Mammary epithelial cell (primary cell): ENCODE measurements at regions of chr3 and their contacts with region 1.

Region 1: DNA sequence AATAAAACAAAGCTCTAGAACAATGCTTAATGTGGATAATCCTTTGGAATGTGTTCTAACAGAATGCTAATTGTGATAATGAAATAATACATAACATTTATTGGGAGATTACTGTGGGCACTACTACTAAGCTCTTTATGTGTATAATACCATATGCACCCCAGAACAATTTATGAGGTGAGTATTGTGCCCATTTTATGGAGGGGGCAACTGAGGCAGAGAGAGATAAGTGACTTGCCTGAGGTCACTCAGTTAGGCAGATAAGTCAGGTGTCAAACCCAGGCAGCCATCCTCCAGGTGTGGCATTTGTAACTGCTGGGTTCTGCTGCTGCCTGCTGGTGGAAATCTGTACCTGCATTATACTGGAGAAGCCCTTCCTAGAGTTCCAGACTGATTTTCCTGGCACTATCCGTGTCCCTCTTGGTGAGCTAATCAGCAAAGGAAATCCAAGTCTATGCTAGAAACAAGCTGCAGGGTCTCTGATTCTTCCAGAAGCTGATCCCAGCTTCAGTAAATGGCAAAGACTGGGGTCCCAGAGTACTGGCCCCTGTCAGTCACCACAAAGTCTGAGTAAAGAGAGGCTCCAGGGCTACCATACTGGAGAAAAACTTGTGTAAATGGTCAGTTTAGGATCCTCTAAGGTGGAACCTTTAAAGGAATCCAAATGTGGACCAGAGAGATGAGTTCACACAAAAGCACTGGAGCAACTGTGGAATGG is 22.6 kb upstream of the RBP1 start:
- DNase-seq: peak; percentile 45
- H3K4me3 ChIP-seq: no peak overlapping the region
- H3K27ac ChIP-seq: no peak overlapping the region
- H3K4me1 ChIP-seq: peaks cover 30% of the 10 kb centered on the region
- H3K27me3 ChIP-seq: no peaks in the 10 kb centered on the region
- CTCF ChIP-seq: peak; percentile 96 to 98

Region 2: DNA sequence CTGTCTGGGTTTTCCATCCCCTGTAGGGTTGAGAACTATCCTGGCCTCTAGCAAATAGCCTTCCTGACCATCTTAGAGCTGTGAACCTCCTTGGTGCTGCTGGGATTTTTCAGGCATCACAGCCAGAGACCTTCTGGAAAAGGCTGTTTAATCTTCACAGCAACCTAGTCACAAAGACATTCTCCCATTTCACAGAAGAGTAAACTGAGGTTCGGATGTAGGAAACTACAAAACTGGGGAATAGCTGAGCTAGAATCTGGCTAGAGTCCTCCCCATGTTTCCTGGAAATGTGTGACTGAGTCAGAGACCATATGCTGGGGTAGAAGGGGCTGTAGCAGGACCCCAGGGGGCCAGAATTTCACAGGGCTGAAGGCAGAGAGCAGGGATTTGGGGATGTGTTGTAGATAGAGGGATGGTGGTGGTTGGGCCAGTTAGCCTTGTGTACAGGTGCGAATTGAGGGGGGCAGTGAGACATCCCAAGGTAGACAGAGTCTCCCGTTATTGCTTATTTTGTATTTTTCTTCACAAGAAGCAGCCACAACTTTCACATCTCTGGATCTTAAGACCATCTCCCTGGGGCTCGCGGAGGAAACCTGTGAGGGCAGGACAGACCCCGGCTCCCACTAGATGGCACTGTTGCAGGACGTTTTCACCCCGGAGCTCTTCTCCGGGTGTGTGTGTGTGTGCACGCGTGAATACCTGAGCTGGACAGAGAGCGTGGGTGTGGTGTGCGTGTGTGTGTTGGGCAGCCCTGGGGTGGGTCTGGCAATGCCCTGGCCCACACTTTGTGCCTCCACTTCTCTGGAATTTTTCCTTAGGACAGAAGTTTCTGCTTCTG is 450.5 kb before region 1 on chr3:
- CTCF ChIA-PET with region 1: no interaction called
- dilution Hi-C with region 1: no loop called
- in situ Hi-C with region 1: no loop called
- intact Hi-C with region 1: loop called (anchors 2 kb)
- DNase-seq: peak; percentile 35
- H3K4me3 ChIP-seq: no peak overlapping the region
- H3K27ac ChIP-seq: no peak overlapping the region
- H3K4me1 ChIP-seq: no peaks in the 10 kb centered on the region
- H3K27me3 ChIP-seq: no peaks in the 10 kb centered on the region
- CTCF ChIP-seq: peak; percentile 83 to 88

Region 3: GRCh38 chr3:139378587-139379241 is 183.4 kb before region 1 on chr3:
- CTCF ChIA-PET with region 1: no interaction called
- dilution Hi-C with region 1: no loop called
- in situ Hi-C with region 1: no loop called
- intact Hi-C with region 1: no loop called
- DNase-seq: no peak
- H3K4me3 ChIP-seq: no peak overlapping the region
- H3K27ac ChIP-seq: no peak overlapping the region
- H3K4me1 ChIP-seq: no peaks in the 10 kb centered on the region
- H3K27me3 ChIP-seq: no peaks in the 10 kb centered on the region
- CTCF ChIP-seq: no peak

Region 4: GRCh38 chr3:139389458-139390209 is 172.5 kb before region 1 on chr3 and contains the start of gene COPB2:
- CTCF ChIA-PET with region 1: no interaction called
- dilution Hi-C with region 1: no loop called
- in situ Hi-C with region 1: no loop called
- intact Hi-C with region 1: loop called (anchors 1 kb)
- DNase-seq: peak; percentile 98
- H3K4me3 ChIP-seq: peak within 1 kb of the TSS; percentile 77 to 83 (median 81)
- H3K27ac ChIP-seq: peak within 1 kb of the TSS; percentile 97
- H3K4me1 ChIP-seq: peaks cover 10% of the 10 kb centered on the region
- H3K27me3 ChIP-seq: no peaks in the 10 kb centered on the region
- CTCF ChIP-seq: no peak
- total RNA-seq, gene COPB2: 108 to 132 TPM

Region 5: GRCh38 chr3:139434764-139435307 is 127.3 kb before region 1 on chr3:
- CTCF ChIA-PET with region 1: no interaction called
- dilution Hi-C with region 1: no loop called
- in situ Hi-C with region 1: loop called in 1 of 2 experiments (anchors 5 kb)
- intact Hi-C with region 1: loop called (anchors 1 kb)
- DNase-seq: peak; percentile 92
- H3K4me3 ChIP-seq: no peak overlapping the region
- H3K27ac ChIP-seq: peak overlapping the region; percentile 11
- H3K4me1 ChIP-seq: peaks cover 19% of the 10 kb centered on the region
- H3K27me3 ChIP-seq: no peaks in the 10 kb centered on the region
- CTCF ChIP-seq: peak; percentile 31 to 67

Region 6: GRCh38 chr3:139533781-139534443 is 28.2 kb before region 1 on chr3:
- CTCF ChIA-PET with region 1: no interaction called
- dilution Hi-C with region 1: no loop called
- in situ Hi-C with region 1: no loop called
- intact Hi-C with region 1: loop called (anchors 1 kb)
- DNase-seq: peak; percentile 81
- H3K4me3 ChIP-seq: no peak overlapping the region
- H3K27ac ChIP-seq: peak overlapping the region; percentile 92
- H3K4me1 ChIP-seq: peaks cover 54% of the 10 kb centered on the region
- H3K27me3 ChIP-seq: no peaks in the 10 kb centered on the region
- CTCF ChIP-seq: no peak

Region 7: DNA sequence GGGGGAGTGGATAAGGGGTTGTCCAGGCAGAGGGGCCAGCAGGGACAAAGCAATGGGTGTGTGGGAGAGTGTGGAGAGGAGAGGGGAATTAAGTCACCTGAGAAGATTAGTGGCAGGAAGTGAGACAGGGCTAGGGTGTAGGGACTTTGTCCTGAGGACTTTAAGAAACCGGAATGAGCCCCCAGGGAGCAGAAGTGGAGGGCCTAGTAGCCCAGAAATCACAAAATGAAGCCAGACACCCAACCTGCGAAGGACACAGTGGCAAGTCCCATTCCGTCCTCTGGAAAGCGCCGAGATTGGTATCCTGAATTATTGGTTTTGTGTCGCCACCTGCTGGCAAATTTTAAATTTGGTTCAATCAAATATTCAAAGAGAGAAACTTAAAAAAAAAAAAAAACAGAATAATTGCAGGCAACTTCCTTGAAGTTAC is 1301.5 kb after region 1 on chr3:
- CTCF ChIA-PET with region 1: no interaction called
- dilution Hi-C with region 1: no loop called
- in situ Hi-C with region 1: no loop called
- intact Hi-C with region 1: loop called (anchors 10 kb)
- DNase-seq: peak; percentile 43
- H3K4me3 ChIP-seq: no peak overlapping the region
- H3K27ac ChIP-seq: no peak overlapping the region
- H3K4me1 ChIP-seq: no peaks in the 10 kb centered on the region
- H3K27me3 ChIP-seq: no peaks in the 10 kb centered on the region
- CTCF ChIP-seq: peak; percentile 38 to 48